T-cell (primary cell): ENCODE measurements at regions of chr11 and their contacts with region 1.

Region 1: GRCh38 chr11:104033134-104033533 is 3.3 kb upstream of the DDI1 start:
- DNase-seq: no peak
- ATAC-seq: no peak
- H3K4me3 ChIP-seq: no peak overlapping the region
- H3K4me3 Mint-ChIP-seq: no peak overlapping the region
- H3K27ac ChIP-seq: no peak overlapping the region
- H3K27ac Mint-ChIP-seq: no peak overlapping the region
- H3K4me1 ChIP-seq: no peaks in the 10 kb centered on the region
- H3K4me1 Mint-ChIP-seq: no peaks in the 10 kb centered on the region
- H3K27me3 ChIP-seq: no peaks in the 10 kb centered on the region
- H3K27me3 Mint-ChIP-seq: no peaks in the 10 kb centered on the region

Region 2: DNA sequence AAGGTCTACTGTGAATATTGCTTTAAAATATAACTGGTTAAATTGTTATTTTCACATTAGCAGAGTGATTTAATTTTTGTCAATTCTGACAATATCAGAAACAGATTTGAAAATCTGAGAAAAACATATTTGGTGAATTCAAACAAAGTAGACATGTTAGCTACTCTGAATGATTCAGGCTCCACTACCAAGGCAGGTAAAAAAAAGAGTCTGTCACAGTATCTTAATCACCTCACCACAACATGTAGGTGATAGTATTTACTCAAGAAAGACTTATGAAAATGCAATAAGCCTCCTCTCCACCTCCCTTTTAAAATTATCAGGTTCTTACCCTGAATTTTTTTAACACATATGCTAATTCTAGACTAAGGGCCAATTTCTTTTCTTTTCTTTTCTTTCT is 45.9 kb after region 1 on chr11:
- CTCF ChIA-PET with region 1: no interaction called
- POLR2A ChIA-PET with region 1: interaction called in 1 of 2 experiments, 12 read pairs
- DNase-seq: no peak
- ATAC-seq: no peak
- H3K4me3 ChIP-seq: no peak overlapping the region
- H3K4me3 Mint-ChIP-seq: no peak overlapping the region
- H3K27ac ChIP-seq: no peak overlapping the region
- H3K27ac Mint-ChIP-seq: no peak overlapping the region
- H3K4me1 ChIP-seq: no peaks in the 10 kb centered on the region
- H3K4me1 Mint-ChIP-seq: no peaks in the 10 kb centered on the region
- H3K27me3 ChIP-seq: no peaks in the 10 kb centered on the region
- H3K27me3 Mint-ChIP-seq: peaks cover 0 to 6% of the 10 kb centered on the region in 2 donors